ENCODE measurements at regions of chr3 and their contacts with region 1.

Region 1: GRCh38 chr3:177133860-177134815 is 63.1 kb downstream of the TBL1XR1 start:
- DNase-seq: no peak
- ATAC-seq: peak in 2 of 8 donors; percentile 36 to 64
- H3K4me3 ChIP-seq: no peak overlapping the region
- H3K27ac ChIP-seq: peak overlapping the region in 2 of 10 donors; percentile 2 to 24
- H3K4me1 ChIP-seq: peaks cover 0 to 76% (median 33%) of the 10 kb centered on the region in 9 donors
- H3K27me3 ChIP-seq: no peaks in the 10 kb centered on the region
- CTCF ChIP-seq: no peak

Region 2: DNA sequence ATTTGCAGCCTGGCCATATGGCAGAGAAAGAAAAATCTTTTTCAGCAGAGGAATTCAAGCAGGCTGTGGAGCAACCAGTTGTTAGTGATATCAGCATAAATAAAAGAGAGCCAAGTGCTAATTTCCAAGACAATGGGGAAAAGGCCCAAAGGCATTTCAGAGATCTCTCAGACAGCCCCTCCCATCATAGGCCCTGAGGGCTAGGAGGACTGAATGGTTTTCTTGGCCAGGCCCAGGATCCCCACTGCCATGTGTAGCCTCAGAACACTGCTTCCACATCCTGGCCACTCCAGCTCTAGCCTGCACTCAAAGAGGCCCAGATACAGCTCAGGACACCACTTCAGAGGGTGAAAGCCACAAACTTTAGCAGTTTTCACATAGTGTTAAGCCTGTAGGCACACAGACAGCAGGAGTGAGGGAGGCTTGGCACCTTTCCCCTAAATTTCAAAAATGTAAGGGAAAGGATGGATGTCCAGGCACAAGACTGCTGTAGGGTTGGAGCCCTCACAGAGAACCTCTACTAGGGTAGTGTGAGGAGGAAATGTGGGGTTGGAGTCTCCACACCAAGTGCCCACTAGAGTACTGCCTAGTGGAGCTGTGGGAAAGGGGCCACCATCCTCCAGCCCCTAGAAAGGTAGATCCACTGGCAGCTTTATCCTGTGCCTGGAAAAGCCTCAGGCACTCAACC is 128.3 kb before region 1 on chr3:
- intact Hi-C with region 1: no loop called
- DNase-seq: no peak
- ATAC-seq: no peak
- H3K4me3 ChIP-seq: no peak overlapping the region
- H3K27ac ChIP-seq: no peak overlapping the region
- H3K4me1 ChIP-seq: no peaks in the 10 kb centered on the region
- H3K27me3 ChIP-seq: no peaks in the 10 kb centered on the region
- CTCF ChIP-seq: no peak

Region 3: GRCh38 chr3:177185035-177185574 is 51.0 kb after region 1 on chr3:
- intact Hi-C with region 1: loop called in 2 of 10 experiments (anchors 10 kb)
- DNase-seq: no peak
- ATAC-seq: peak in 2 of 8 donors; percentile 23 to 48
- H3K4me3 ChIP-seq: no peak overlapping the region
- H3K27ac ChIP-seq: no peak overlapping the region
- H3K4me1 ChIP-seq: peaks cover 7 to 86% (median 50%) of the 10 kb centered on the region in 9 donors
- H3K27me3 ChIP-seq: no peaks in the 10 kb centered on the region
- CTCF ChIP-seq: no peak